ENCODE measurements at regions of chr15 and their contacts with region 1.

Region 1: DNA sequence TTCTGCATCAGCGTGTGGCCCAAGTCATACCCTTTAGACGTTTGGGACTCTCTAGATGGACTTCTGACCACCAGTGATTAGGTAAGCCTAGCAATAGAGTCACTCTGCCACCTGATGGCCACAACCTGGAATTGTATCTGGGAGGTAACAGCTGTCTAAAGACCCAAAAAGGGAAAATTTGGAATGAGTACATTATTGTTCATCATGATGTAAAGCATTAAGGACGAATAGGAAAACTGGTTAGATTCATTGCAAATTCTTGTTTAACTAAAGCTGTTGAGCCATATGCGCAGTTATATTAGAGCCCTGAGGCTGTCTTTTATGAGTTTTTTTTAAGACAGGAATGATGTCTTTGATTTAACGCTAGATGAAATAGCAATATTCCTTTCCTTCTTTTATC is 63.6 kb downstream of the FAM81A start:
- DNase-seq: no peak
- H3K4me3 ChIP-seq: no peak overlapping the region
- CTCF ChIP-seq: no peak
- POLR2A ChIP-seq: no peak

Region 2: GRCh38 chr15:58977887-58978286 is 523.7 kb before region 1 on chr15:
- intact Hi-C with region 1: loop called (anchors 10 kb)
- DNase-seq: no peak
- H3K4me3 ChIP-seq: no peak overlapping the region
- CTCF ChIP-seq: no peak
- POLR2A ChIP-seq: no peak

Measured in lower leg skin (tissue), 4 donors.